Aorta (tissue), 5 donors: ENCODE measurements at regions of chr2 and their contacts with region 1.

Region 1: DNA sequence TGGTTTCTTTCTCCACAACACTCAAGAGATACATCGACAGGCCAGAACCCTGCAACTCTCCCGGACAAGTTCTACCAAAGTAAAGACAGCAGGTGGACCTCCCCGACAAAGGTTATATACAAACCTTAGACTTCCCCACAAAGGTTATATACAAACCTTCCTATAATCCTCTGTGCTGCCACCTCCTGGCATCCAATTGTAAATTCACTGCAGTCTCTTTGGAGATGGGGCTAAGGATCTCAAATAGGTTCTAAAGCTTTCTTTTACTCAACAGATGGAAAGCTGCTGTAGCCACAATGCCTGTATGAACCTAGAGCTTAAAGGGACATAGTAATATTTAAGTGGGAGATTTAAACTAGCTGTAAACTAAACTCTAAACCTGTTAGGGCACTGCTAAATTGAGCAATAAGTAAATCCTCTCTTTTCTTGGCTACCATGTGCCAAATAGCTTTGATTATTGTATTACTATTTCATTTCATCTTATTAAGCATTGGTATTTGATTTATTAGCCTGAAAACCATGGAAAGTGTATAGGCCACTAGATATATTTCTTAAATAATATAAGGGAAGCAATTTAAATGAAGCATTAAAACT is 9.8 kb upstream of the MREG start:
- DNase-seq: no peak
- ATAC-seq: no peak
- H3K4me3 ChIP-seq: no peak overlapping the region
- H3K27ac ChIP-seq: no peak overlapping the region
- H3K4me1 ChIP-seq: no peaks in the 10 kb centered on the region
- H3K27me3 ChIP-seq: no peaks in the 10 kb centered on the region

Region 2: GRCh38 chr2:215949991-215950404 is 73.2 kb before region 1 on chr2:
- intact Hi-C with region 1: loop called in 1 of 2 experiments (anchors 1 kb)
- DNase-seq: no peak
- ATAC-seq: no peak
- H3K4me3 ChIP-seq: no peak overlapping the region
- H3K27ac ChIP-seq: no peak overlapping the region
- H3K4me1 ChIP-seq: no peaks in the 10 kb centered on the region
- H3K27me3 ChIP-seq: no peaks in the 10 kb centered on the region